A673 (cell line): ENCODE measurements at regions of chrX and their contacts with region 1.

Region 1: GRCh38 chrX:11787564-11787963 is 29.5 kb downstream of the MSL3 start:
- DNase-seq: peak; percentile 72
- H3K4me3 ChIP-seq: no peak overlapping the region
- H3K27ac ChIP-seq: no peak overlapping the region
- H3K4me1 ChIP-seq: no peaks in the 10 kb centered on the region
- H3K27me3 ChIP-seq: peaks cover 11% of the 10 kb centered on the region
- CTCF ChIP-seq: peak; percentile 66

Region 2: GRCh38 chrX:11724122-11725017 is 63.2 kb before region 1 on chrX:
- CTCF ChIA-PET with region 1: no interaction called
- POLR2A ChIA-PET with region 1: no interaction called
- intact Hi-C with region 1: no loop called
- DNase-seq: peak; percentile 49
- H3K4me3 ChIP-seq: no peak overlapping the region
- H3K27ac ChIP-seq: no peak overlapping the region
- H3K4me1 ChIP-seq: no peaks in the 10 kb centered on the region
- H3K27me3 ChIP-seq: peaks cover 7% of the 10 kb centered on the region
- CTCF ChIP-seq: peak; percentile 79

Region 3: DNA sequence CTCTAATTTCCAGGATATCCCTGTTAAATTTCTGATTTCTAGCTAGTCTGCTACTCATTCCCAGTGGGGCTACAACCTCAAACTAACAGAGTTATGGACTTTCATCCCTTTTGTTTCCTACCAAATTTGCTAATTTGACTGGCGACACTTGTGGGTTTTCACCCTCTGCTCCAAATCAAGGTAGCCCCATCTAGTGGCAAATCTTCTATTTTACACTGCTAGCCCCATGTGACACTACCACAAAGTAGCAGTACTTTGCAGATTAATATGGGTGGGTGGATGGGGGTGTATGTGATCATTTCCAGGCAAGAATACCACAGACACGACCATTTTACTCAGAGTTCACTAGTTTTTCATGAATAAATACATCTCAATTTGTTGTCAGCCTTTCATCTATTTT is 120.8 kb after region 1 on chrX:
- CTCF ChIA-PET with region 1: no interaction called
- POLR2A ChIA-PET with region 1: no interaction called
- intact Hi-C with region 1: loop called (anchors 1 kb)
- DNase-seq: peak; percentile 49
- H3K4me3 ChIP-seq: no peak overlapping the region
- H3K27ac ChIP-seq: no peak overlapping the region
- H3K4me1 ChIP-seq: no peaks in the 10 kb centered on the region
- H3K27me3 ChIP-seq: peaks cover 8% of the 10 kb centered on the region
- CTCF ChIP-seq: peak; percentile 64